CD8-positive, alpha-beta T cell (primary cell): ENCODE measurements at regions of chr13 and their contacts with region 1.

Region 1: DNA sequence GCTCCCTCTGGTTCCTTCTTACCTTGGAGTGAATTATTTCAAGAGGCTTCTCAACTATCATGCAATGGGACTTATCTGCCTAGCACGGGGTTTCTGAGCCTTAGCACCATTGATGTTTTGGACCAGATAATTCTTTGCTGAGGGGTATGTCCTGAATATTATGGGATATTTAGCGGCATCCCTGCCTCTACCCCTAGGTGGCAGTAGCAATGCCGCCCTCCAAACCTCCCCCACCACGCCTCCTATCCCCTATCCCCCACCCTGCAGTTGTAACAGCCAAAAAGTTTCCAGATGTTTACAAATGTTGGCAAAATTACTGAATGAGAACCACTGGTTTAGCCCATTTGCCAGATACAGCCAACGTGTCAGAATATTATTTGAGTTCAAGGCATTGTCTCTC is 125.5 kb downstream of the POSTN start:
- DNase-seq: no peak
- ATAC-seq: no peak
- H3K4me3 ChIP-seq: no peak overlapping the region
- H3K4me3 Mint-ChIP-seq: no peak overlapping the region
- H3K27ac ChIP-seq: no peak overlapping the region
- H3K27ac Mint-ChIP-seq: no peak overlapping the region
- H3K4me1 ChIP-seq: no peaks in the 10 kb centered on the region
- H3K4me1 Mint-ChIP-seq: no peaks in the 10 kb centered on the region
- H3K27me3 ChIP-seq: no peaks in the 10 kb centered on the region
- H3K27me3 Mint-ChIP-seq: no peaks in the 10 kb centered on the region
- CTCF ChIP-seq: no peak

Region 2: GRCh38 chr13:38686577-38687245 is 1213.7 kb after region 1 on chr13 and contains the start of gene FREM2:
- CTCF ChIA-PET with region 1: no interaction called
- POLR2A ChIA-PET with region 1: no interaction called
- intact Hi-C with region 1: loop called in 1 of 2 experiments (anchors 5 kb)
- DNase-seq: no peak
- ATAC-seq: no peak
- H3K4me3 ChIP-seq: no peak within 1 kb of the TSS
- H3K4me3 Mint-ChIP-seq: no peak within 1 kb of the TSS
- H3K27ac ChIP-seq: no peak within 1 kb of the TSS
- H3K27ac Mint-ChIP-seq: no peak within 1 kb of the TSS
- H3K4me1 ChIP-seq: no peaks in the 10 kb centered on the region
- H3K4me1 Mint-ChIP-seq: no peaks in the 10 kb centered on the region
- H3K27me3 ChIP-seq: peaks cover 0 to 5% of the 10 kb centered on the region in 2 experiments
- H3K27me3 Mint-ChIP-seq: peaks cover 9% of the 10 kb centered on the region
- CTCF ChIP-seq: no peak
- total RNA-seq, gene FREM2: not detected